Naive thymus-derived CD4-positive, alpha-beta T cell (primary cell): ENCODE measurements at regions of chr1 and their contacts with region 1.

Region 1: DNA sequence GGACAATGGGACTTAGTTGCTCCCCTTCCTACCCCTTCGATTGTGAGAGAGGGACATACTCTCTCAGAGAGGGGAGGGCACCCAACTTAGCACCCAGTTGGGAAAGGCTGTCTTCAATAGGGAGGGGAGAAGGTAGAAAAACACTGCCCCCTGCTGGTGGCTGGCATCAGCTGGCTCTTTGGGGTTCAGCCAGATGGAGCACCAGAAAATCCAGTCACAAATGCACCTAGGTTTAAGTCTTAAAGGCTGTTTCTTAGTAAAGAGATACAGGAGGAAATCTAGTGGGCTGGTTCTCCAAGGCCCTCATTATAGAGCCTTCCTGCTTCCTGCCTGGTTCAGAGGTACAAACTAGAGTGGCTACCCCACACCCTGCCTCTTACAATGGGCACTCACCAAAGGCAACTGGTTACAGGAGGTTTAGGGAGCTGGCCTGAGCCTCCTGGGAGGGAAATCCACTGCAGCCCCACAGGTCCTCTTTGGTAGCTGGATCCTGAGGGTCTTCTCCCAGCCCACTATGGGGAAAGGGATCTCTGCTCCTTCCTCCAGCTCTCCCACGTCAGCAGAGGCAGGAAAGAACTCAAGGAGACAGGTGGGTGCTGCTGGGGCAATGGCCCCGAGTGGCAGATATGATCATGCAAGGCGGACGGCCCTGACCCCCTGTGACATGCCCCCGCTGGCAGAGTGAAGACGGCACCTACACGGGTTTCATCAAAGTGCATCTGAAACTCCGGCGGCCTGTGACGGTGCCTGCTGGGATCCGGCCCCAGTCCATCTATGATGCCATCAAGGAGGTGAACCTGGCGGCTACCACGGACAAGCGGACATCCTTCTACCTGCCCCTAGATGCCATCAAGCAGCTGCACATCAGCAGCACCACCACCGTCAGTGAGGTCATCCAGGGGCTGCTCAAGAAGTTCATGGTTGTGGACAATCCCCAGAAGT is 28.3 kb downstream of the EIF2D start:
- DNase-seq: peak; percentile 73 to 86 (median 80)
- ATAC-seq: peak; percentile 52
- H3K4me3 ChIP-seq: peak overlapping the region; percentile 11
- H3K4me3 Mint-ChIP-seq: peak overlapping the region; percentile 74 to 90 (median 82)
- H3K27ac ChIP-seq: peak overlapping the region; percentile 90
- H3K27ac Mint-ChIP-seq: peak overlapping the region; percentile 86 to 100 (median 93)
- H3K4me1 ChIP-seq: peaks cover 47 to 56% of the 10 kb centered on the region in 2 donors
- H3K4me1 Mint-ChIP-seq: peaks cover 42 to 92% (median 73%) of the 10 kb centered on the region in 7 donors
- H3K27me3 ChIP-seq: no peaks in the 10 kb centered on the region
- H3K27me3 Mint-ChIP-seq: no peaks in the 10 kb centered on the region

Region 2: DNA sequence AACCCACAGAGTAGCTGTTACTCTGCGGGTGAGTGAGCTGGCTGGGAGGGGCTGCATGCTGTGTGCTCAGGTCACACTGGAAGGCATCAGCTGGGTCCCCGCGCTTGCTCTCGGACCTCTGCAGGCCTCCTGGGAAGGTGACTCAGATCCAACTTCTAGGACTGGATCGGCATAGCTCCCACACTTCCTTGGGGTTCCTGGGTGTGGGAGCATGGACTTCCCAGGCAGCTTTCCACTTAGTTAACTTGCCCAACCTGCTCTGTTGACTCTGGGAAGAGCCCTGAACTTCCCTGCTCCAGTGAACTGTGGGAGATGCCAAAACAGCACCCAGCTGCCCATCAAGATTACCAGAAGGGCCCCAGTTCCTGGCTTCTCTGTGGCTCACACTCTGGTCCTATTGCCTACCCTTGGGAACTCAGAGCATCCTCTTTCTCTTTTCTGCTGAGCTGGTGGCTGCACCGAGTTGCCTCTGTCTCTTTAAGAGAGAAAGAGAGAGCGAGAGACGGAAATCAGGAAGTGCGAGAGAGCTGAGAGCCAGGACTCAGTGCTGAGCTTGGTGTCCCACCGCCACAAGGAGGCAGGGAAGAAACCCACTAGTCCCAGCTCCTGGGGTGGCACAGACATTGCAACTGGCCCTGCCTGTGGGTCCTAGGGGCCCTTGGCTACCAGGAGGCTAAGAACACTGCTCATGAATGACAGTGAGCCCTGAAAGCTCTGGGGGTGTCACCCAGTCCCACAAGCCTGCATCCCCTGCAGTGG is 113.9 kb before region 1 on chr1 and contains the start of gene IKBKE:
- CTCF ChIA-PET with region 1: interaction called, 7 read pairs
- POLR2A ChIA-PET with region 1: interaction called, 4 read pairs
- intact Hi-C with region 1: loop called in 1 of 2 experiments (anchors 5 kb)
- DNase-seq: peak in 8 of 9 donors; percentile 37 to 58 (median 44)
- ATAC-seq: peak; percentile 74
- H3K4me3 ChIP-seq: peak within 1 kb of the TSS; percentile 98
- H3K4me3 Mint-ChIP-seq: peak within 1 kb of the TSS; percentile 88 to 95 (median 93)
- H3K27ac ChIP-seq: peak within 1 kb of the TSS; percentile 78
- H3K27ac Mint-ChIP-seq: peak within 1 kb of the TSS; percentile 75 to 97 (median 86)
- H3K4me1 ChIP-seq: peaks cover 64 to 66% of the 10 kb centered on the region in 2 donors
- H3K4me1 Mint-ChIP-seq: peaks cover 55 to 86% (median 78%) of the 10 kb centered on the region in 7 donors
- H3K27me3 ChIP-seq: no peaks in the 10 kb centered on the region
- H3K27me3 Mint-ChIP-seq: no peaks in the 10 kb centered on the region
- total RNA-seq, gene IKBKE: 50.1 to 177 (median 79.1) TPM

Region 3: GRCh38 chr1:206489980-206490770 is 93.8 kb before region 1 on chr1:
- CTCF ChIA-PET with region 1: interaction called, 6 read pairs
- POLR2A ChIA-PET with region 1: no interaction called
- intact Hi-C with region 1: loop called in 1 of 2 experiments (anchors 1 kb)
- DNase-seq: peak; percentile 39 to 78 (median 58)
- ATAC-seq: peak; percentile 90
- H3K4me3 ChIP-seq: no peak overlapping the region
- H3K4me3 Mint-ChIP-seq: no peak overlapping the region
- H3K27ac ChIP-seq: no peak overlapping the region
- H3K27ac Mint-ChIP-seq: peak overlapping the region in 5 of 9 donors; percentile 8 to 67 (median 51)
- H3K4me1 ChIP-seq: no peaks in the 10 kb centered on the region
- H3K4me1 Mint-ChIP-seq: peaks cover 0 to 23% (median 0%) of the 10 kb centered on the region in 7 donors
- H3K27me3 ChIP-seq: no peaks in the 10 kb centered on the region
- H3K27me3 Mint-ChIP-seq: no peaks in the 10 kb centered on the region

Region 4: GRCh38 chr1:206544562-206545257 is 39.3 kb before region 1 on chr1:
- CTCF ChIA-PET with region 1: interaction called, 424 read pairs
- POLR2A ChIA-PET with region 1: interaction called, 722 read pairs
- intact Hi-C with region 1: loop called (anchors 1 kb)
- DNase-seq: peak; percentile 58 to 86 (median 77)
- ATAC-seq: peak; percentile 94
- H3K4me3 ChIP-seq: no peak overlapping the region
- H3K4me3 Mint-ChIP-seq: no peak overlapping the region
- H3K27ac ChIP-seq: no peak overlapping the region
- H3K27ac Mint-ChIP-seq: peak overlapping the region in 7 of 9 donors; percentile 17 to 63 (median 49)
- H3K4me1 ChIP-seq: peaks cover 4 to 9% of the 10 kb centered on the region in 2 donors
- H3K4me1 Mint-ChIP-seq: peaks cover 12 to 26% (median 19%) of the 10 kb centered on the region in 7 donors
- H3K27me3 ChIP-seq: no peaks in the 10 kb centered on the region
- H3K27me3 Mint-ChIP-seq: no peaks in the 10 kb centered on the region

Region 5: GRCh38 chr1:206556750-206557635 is 27.0 kb before region 1 on chr1:
- CTCF ChIA-PET with region 1: interaction called, 424 read pairs
- POLR2A ChIA-PET with region 1: interaction called, 722 read pairs
- intact Hi-C with region 1: loop called (anchors 1 kb)
- DNase-seq: peak; percentile 78 to 93 (median 88)
- ATAC-seq: peak; percentile 86
- H3K4me3 ChIP-seq: peak overlapping the region; percentile 90
- H3K4me3 Mint-ChIP-seq: peak overlapping the region; percentile 77 to 99 (median 96)
- H3K27ac ChIP-seq: peak overlapping the region; percentile 90
- H3K27ac Mint-ChIP-seq: peak overlapping the region; percentile 86 to 100 (median 94)
- H3K4me1 ChIP-seq: peaks cover 61 to 66% of the 10 kb centered on the region in 2 donors
- H3K4me1 Mint-ChIP-seq: peaks cover 59 to 75% (median 70%) of the 10 kb centered on the region in 7 donors
- H3K27me3 ChIP-seq: no peaks in the 10 kb centered on the region
- H3K27me3 Mint-ChIP-seq: no peaks in the 10 kb centered on the region

Region 6: GRCh38 chr1:206814716-206815341 is 230.9 kb after region 1 on chr1:
- CTCF ChIA-PET with region 1: no interaction called
- POLR2A ChIA-PET with region 1: no interaction called
- intact Hi-C with region 1: no loop called
- DNase-seq: no peak
- ATAC-seq: peak; percentile 38
- H3K4me3 ChIP-seq: no peak overlapping the region
- H3K4me3 Mint-ChIP-seq: no peak overlapping the region
- H3K27ac ChIP-seq: no peak overlapping the region
- H3K27ac Mint-ChIP-seq: peak overlapping the region in 7 of 9 donors; percentile 8 to 97 (median 41)
- H3K4me1 ChIP-seq: peaks cover 0 to 14% of the 10 kb centered on the region in 2 donors
- H3K4me1 Mint-ChIP-seq: peaks cover 20 to 53% (median 44%) of the 10 kb centered on the region in 7 donors
- H3K27me3 ChIP-seq: no peaks in the 10 kb centered on the region
- H3K27me3 Mint-ChIP-seq: no peaks in the 10 kb centered on the region